AG04449 (cell line): ENCODE measurements at regions of chr1 and their contacts with region 1.

Region 1: GRCh38 chr1:8962812-8963530 is 17.3 kb downstream of the CA6 start:
- DNase-seq: no peak
- H3K4me3 ChIP-seq: no peak overlapping the region
- CTCF ChIP-seq: peak; percentile 37

Region 2: DNA sequence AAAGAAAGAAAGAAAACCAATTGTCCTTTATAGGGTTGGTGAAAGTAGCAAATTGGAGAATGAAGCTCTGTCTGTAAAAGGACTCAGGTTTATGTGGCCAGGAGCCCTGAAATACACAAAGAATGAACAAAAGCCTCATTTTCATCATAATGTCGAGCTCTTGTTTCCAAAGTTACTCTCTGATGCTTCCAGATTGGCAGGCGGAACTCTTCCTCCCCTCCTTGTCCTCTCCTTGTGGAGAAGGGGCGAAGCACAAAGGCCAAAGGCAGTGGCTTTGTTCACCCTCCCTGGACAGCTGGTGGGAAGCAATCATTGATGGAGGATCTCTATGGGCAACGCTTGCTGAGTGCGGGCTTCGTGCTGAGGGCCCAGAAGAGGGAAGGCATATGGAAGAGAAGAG is 11.7 kb before region 1 on chr1:
- CTCF ChIA-PET with region 1: interaction called, 18 read pairs
- POLR2A ChIA-PET with region 1: no interaction called
- DNase-seq: no peak
- H3K4me3 ChIP-seq: no peak overlapping the region
- CTCF ChIP-seq: no peak

Region 3: DNA sequence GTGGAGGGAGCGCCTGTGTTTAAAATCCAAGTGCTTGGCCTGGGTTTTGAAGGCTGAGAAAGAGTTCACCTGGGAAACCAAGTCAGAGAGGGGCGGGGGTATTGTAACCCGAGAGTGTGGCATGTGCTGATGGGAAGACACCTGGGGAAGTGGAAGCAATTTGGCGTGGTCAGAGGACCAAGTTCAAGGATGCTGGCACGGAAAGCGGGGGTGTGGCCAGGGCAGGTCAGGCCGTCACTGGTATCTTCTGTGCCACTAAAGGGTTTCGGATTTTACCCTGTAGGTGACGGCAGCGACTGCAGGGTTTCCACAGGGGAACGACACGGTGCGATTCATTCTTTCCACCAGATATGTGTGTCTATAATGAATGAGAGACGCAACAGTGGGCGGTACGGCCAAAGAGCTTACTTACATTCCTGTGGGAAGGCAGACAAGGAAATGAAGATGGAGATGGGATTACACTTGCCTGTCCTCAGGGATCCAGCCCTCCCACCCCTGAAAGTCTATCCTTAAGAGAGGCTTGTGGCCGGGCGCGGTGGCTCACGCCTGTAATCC is 14.0 kb after region 1 on chr1:
- CTCF ChIA-PET with region 1: interaction called, 12 read pairs
- POLR2A ChIA-PET with region 1: no interaction called
- DNase-seq: no peak
- H3K4me3 ChIP-seq: no peak overlapping the region
- CTCF ChIP-seq: no peak